ENCODE measurements at regions of chr3 and their contacts with region 1.

Region 1: GRCh38 chr3:48194446-48195071 is 6.3 kb upstream of the CDC25A start:
- DNase-seq: peak; percentile 23 to 95
- H3K4me3 ChIP-seq: no peak overlapping the region
- H3K27ac ChIP-seq: no peak overlapping the region
- H3K4me1 ChIP-seq: peaks cover 2 to 11% (median 5%) of the 10 kb centered on the region in 4 experiments
- H3K27me3 ChIP-seq: no peaks in the 10 kb centered on the region
- CTCF ChIP-seq: peak; percentile 67 to 91 (median 78)
- EP300 ChIP-seq: no peak
- POLR2A ChIP-seq: no peak
- RAD21 ChIP-seq: peak; percentile 91 to 93

Region 2: DNA sequence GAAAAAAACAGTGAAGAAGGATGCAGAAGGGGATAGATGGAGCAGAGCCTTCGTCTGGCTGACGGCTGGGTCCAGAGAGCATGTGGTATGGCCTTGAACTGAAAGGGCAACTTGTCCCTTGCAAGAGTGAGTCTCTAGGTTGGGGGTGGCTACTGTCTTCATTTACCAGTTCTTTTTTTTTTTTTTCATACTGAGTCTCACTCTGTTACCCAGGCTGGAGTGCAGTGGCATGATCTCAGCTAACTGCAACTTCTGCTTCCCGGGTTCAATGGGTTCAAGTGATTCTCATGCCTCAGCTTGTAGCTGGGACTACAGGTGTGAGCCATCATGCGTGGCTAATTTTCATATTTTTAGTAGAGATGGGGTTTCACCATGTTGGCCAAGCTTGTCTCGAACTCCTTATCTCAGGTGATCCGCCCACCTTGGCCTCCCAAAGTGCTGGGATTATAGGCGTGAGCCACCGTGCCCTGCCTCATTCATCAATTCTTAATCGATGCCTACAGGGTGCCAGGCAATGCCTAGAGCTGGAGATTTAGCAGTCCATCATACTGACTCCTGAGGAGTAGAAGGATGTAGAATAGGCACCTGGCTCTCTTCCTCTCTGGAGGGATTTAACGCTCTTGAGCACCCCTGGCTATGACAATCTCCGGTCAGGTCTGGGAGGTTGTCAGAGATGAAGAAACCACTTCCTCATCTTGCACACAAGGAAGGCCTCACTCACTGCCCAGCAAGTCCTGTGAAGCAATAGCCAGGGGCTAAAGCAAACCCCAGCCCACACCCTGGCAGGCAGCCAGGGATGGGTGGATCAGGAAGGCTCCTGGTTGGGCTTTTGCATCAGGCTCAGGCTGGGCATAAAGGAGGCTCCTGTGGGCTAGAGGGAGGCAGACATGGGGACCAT is 28.3 kb after region 1 on chr3 and contains the start of gene CAMP:
- CTCF ChIA-PET with region 1: interaction called, 14 read pairs
- POLR2A ChIA-PET with region 1: interaction called, 3 read pairs
- DNase-seq: no peak
- H3K4me3 ChIP-seq: no peak within 1 kb of the TSS
- H3K27ac ChIP-seq: no peak within 1 kb of the TSS
- H3K4me1 ChIP-seq: no peaks in the 10 kb centered on the region
- H3K27me3 ChIP-seq: peaks cover 0 to 2% (median 0%) of the 10 kb centered on the region in 4 experiments; a peak in 1 of 7 replicates
- CTCF ChIP-seq: no peak
- EP300 ChIP-seq: no peak
- POLR2A ChIP-seq: no peak
- RAD21 ChIP-seq: no peak
- total RNA-seq, gene CAMP: not detected in 2 replicates

Region 3: DNA sequence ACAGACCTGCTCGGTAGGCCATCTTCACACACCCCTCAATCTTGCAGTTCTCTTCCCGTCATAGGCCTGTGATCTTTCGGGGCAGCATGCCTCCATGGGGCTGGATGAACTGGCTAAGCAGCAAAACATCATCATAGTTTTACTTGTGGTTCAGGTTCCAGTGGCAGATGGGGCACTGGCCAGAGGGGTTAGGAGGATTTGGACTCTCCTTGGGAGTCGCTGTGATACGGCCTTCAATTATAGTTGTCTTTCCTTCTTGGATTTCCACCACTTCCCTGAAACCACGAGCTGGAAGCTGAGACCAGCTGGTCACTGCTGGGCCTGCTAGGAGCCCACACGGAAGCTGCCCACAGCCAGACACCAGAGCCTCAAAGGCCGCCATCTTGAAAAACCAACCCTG is 62.0 kb after region 1 on chr3:
- CTCF ChIA-PET with region 1: interaction called, 14 read pairs
- POLR2A ChIA-PET with region 1: interaction called, 4 read pairs
- DNase-seq: no peak
- H3K4me3 ChIP-seq: no peak overlapping the region
- H3K27ac ChIP-seq: no peak overlapping the region; the same call in 1 of the 2 replicates
- H3K4me1 ChIP-seq: no peaks in the 10 kb centered on the region
- H3K27me3 ChIP-seq: no peaks in the 10 kb centered on the region
- CTCF ChIP-seq: no peak
- EP300 ChIP-seq: no peak
- POLR2A ChIP-seq: no peak
- RAD21 ChIP-seq: no peak

Region 4: GRCh38 chr3:48268381-48269183 is 74.0 kb after region 1 on chr3:
- CTCF ChIA-PET with region 1: interaction called, 16 read pairs
- POLR2A ChIA-PET with region 1: interaction called, 12 read pairs
- DNase-seq: no peak
- H3K4me3 ChIP-seq: no peak overlapping the region
- H3K27ac ChIP-seq: no peak overlapping the region
- H3K4me1 ChIP-seq: no peaks in the 10 kb centered on the region; a peak in 2 of 7 replicates
- H3K27me3 ChIP-seq: no peaks in the 10 kb centered on the region
- CTCF ChIP-seq: no peak
- EP300 ChIP-seq: no peak
- POLR2A ChIP-seq: no peak
- RAD21 ChIP-seq: no peak

Region 5: GRCh38 chr3:48273594-48274211 is 79.1 kb after region 1 on chr3:
- CTCF ChIA-PET with region 1: interaction called, 19 read pairs
- POLR2A ChIA-PET with region 1: interaction called, 12 read pairs
- DNase-seq: peak; percentile 39 to 73
- H3K4me3 ChIP-seq: no peak overlapping the region
- H3K27ac ChIP-seq: no peak overlapping the region
- H3K4me1 ChIP-seq: peaks cover 0 to 26% (median 18%) of the 10 kb centered on the region in 4 experiments; a peak in 5 of 7 replicates
- H3K27me3 ChIP-seq: no peaks in the 10 kb centered on the region
- CTCF ChIP-seq: peak; percentile 63 to 81 (median 77)
- EP300 ChIP-seq: no peak
- POLR2A ChIP-seq: no peak; a peak in 1 of 3 replicates
- RAD21 ChIP-seq: peak; percentile 88 to 91

Region 6: GRCh38 chr3:48408823-48409281 is 214.3 kb after region 1 on chr3:
- CTCF ChIA-PET with region 1: interaction called, 10 read pairs
- POLR2A ChIA-PET with region 1: no interaction called
- DNase-seq: no peak
- H3K4me3 ChIP-seq: no peak overlapping the region
- H3K27ac ChIP-seq: no peak overlapping the region
- H3K4me1 ChIP-seq: no peaks in the 10 kb centered on the region
- H3K27me3 ChIP-seq: no peaks in the 10 kb centered on the region
- CTCF ChIP-seq: peak in 2 of 3 experiments; percentile 30 to 50; a peak in 2 of 4 replicates
- EP300 ChIP-seq: no peak
- POLR2A ChIP-seq: no peak
- RAD21 ChIP-seq: peak in 1 of 2 experiments; percentile 28; a peak in 1 of 4 replicates